SK-N-SH (cell line): ENCODE measurements at regions of chr10 and their contacts with region 1.

Region 1: DNA sequence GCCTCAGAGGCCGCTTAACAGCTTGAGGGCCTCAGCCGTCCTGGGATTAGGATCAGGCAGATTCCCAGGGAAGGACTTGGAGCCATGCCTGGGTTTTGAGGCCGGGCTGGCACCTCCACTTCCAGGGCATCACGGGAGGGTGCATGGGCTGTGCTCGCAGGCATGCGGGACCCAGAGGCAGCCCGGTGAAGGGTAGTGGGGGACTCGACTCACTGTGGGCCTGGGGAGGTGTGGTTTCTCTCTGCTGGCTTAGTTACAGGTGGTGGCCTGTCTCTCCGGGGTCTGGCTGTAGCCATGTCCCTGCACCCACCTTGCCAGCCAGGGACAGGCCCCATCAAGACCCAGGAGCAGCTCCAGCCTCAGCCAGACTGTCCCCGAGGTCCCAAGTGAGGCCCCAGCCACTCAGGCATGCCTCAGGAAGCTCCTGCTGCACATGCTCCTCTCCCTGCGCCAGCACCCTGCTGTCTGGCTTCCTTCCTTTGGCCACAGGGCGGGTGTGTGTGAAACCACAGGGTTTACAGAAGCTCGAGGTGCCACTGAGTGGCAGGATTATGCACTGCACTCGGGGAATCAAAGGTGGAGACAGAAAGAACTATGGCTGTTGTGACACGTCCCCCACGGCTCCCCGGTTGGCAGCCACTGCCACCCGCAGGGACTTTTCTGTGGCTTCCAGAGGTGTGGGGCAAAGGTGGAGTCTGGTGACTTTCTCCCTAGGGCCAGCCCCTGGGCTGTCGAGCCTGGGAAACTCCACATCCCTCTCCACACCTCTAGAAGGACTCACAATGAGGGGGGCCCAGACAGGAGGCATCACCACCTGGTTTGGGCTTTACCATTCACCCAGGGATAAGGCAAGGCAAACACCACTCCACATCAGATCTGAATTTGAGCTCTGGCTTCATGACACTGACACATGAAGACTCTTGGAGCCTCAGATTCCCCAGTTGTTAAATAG is 19.7 kb downstream of the GOLGA7B start:
- DNase-seq: peak; percentile 93
- H3K4me3 ChIP-seq: no peak overlapping the region
- H3K27ac ChIP-seq: peak overlapping the region in 1 of 2 experiments; percentile 80; a peak in 2 of 4 replicates
- H3K4me1 ChIP-seq: peaks cover 0 to 15% of the 10 kb centered on the region in 2 experiments; a peak in 2 of 4 replicates
- H3K27me3 ChIP-seq: peaks cover 18% of the 10 kb centered on the region; the same call in 1 of the 2 replicates
- CTCF ChIP-seq: peak; percentile 72
- EP300 ChIP-seq: no peak
- RAD21 ChIP-seq: peak; percentile 98

Region 2: GRCh38 chr10:97731346-97732051 is 137.9 kb before region 1 on chr10:
- CTCF ChIA-PET with region 1: interaction called, 10 read pairs
- POLR2A ChIA-PET with region 1: no interaction called
- DNase-seq: peak; percentile 70
- H3K4me3 ChIP-seq: peak overlapping the region in 1 of 2 experiments; percentile 10; a peak in 1 of 4 replicates
- H3K27ac ChIP-seq: no peak overlapping the region
- H3K4me1 ChIP-seq: peaks cover 0 to under 1% of the 10 kb centered on the region in 2 experiments; a peak in 1 of 4 replicates
- H3K27me3 ChIP-seq: no peaks in the 10 kb centered on the region
- CTCF ChIP-seq: peak; percentile 88
- EP300 ChIP-seq: no peak
- RAD21 ChIP-seq: peak; percentile 99

Region 3: GRCh38 chr10:97752956-97753355 is 116.4 kb before region 1 on chr10:
- CTCF ChIA-PET with region 1: interaction called, 162 read pairs
- POLR2A ChIA-PET with region 1: interaction called, 5 read pairs
- DNase-seq: no peak
- H3K4me3 ChIP-seq: no peak overlapping the region
- H3K27ac ChIP-seq: no peak overlapping the region
- H3K4me1 ChIP-seq: peaks cover 0 to 4% of the 10 kb centered on the region in 2 experiments; a peak in 1 of 4 replicates
- H3K27me3 ChIP-seq: no peaks in the 10 kb centered on the region
- CTCF ChIP-seq: no peak
- EP300 ChIP-seq: no peak
- RAD21 ChIP-seq: no peak

Region 4: GRCh38 chr10:97780841-97781617 is 88.3 kb before region 1 on chr10:
- CTCF ChIA-PET with region 1: interaction called, 277 read pairs
- POLR2A ChIA-PET with region 1: interaction called, 6 read pairs
- DNase-seq: peak; percentile 57
- H3K4me3 ChIP-seq: no peak overlapping the region
- H3K27ac ChIP-seq: peak overlapping the region in 1 of 2 experiments; percentile 91; a peak in 2 of 4 replicates
- H3K4me1 ChIP-seq: peaks cover 0 to 36% of the 10 kb centered on the region in 2 experiments; a peak in 2 of 4 replicates
- H3K27me3 ChIP-seq: no peaks in the 10 kb centered on the region; the same call in 1 of the 2 replicates
- CTCF ChIP-seq: no peak
- EP300 ChIP-seq: no peak
- RAD21 ChIP-seq: no peak

Region 5: GRCh38 chr10:97849687-97850402 is 19.5 kb before region 1 on chr10 and contains the start of gene GOLGA7B:
- CTCF ChIA-PET with region 1: interaction called, 49 read pairs
- POLR2A ChIA-PET with region 1: interaction called, 4 read pairs
- DNase-seq: peak; percentile 92
- H3K4me3 ChIP-seq: peak within 1 kb of the TSS; percentile 23 to 37; a peak in 2 of 4 replicates
- H3K27ac ChIP-seq: peak within 1 kb of the TSS in 1 of 2 experiments; percentile 29; a peak in 1 of 4 replicates
- H3K4me1 ChIP-seq: peaks cover 0 to 17% of the 10 kb centered on the region in 2 experiments; a peak in 1 of 4 replicates
- H3K27me3 ChIP-seq: peaks cover 32% of the 10 kb centered on the region
- CTCF ChIP-seq: no peak
- EP300 ChIP-seq: no peak
- RAD21 ChIP-seq: no peak
- polyA plus RNA-seq, gene GOLGA7B: 0.03 and 0.13 TPM in 2 replicates

Region 6: DNA sequence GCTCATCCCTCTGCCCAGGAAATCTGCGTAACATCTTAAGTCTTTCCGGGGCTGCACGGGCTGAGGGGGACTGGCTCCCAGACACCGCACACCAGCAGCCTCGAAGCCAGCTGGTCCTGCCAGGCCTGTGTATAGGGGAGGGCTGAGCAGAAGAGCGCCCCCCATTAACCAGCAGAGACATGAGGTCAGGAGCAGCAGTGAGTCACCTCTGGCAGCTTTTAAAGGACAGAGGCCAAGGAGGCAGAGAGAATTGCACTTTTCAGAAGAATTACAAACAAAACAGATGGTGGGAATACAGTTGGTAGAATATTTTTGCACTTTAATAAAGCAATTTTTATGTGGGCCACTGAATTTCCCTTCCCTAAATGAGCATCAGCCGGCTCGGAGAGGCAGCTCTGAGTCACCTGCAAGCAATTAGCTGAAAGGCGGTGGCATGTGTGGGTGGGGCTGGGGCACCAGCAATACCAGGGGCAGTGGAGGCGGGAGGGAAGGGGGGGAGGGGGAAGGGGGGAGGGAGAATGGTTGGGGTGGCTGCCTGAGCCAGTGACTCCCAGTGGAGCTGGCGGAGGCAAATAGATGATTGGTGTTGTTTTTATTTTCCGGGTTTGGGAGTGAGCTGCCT is 19.4 kb after region 1 on chr10:
- CTCF ChIA-PET with region 1: interaction called, 15 read pairs
- POLR2A ChIA-PET with region 1: interaction called, 4 read pairs
- DNase-seq: peak; percentile 88
- H3K4me3 ChIP-seq: no peak overlapping the region
- H3K27ac ChIP-seq: peak overlapping the region; percentile 35 to 66
- H3K4me1 ChIP-seq: peaks cover 5 to 22% of the 10 kb centered on the region in 2 experiments; a peak in 2 of 4 replicates
- H3K27me3 ChIP-seq: peaks cover 4% of the 10 kb centered on the region; the same call in 1 of the 2 replicates
- CTCF ChIP-seq: peak; percentile 41
- EP300 ChIP-seq: peak in 1 of 2 experiments; percentile 49; a peak in 2 of 4 replicates
- RAD21 ChIP-seq: no peak

Region 7: DNA sequence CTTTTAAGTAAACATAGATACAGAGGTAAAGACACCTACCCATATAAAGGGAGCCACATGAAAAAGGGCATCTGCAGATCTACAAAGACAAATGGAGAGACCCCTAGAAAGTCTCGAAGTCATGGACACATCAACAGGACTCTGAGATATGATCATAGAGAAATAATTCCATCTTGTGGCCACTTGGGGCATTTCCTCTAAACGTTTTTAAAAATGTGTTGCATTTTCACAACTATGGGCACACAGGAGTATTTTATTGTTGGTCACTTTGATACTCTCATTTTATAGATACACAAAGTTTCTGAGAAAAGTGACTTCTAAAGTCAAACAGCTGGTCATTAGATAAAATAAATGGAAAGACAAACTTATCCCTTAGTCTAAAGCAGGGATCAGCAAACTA is 73.9 kb after region 1 on chr10:
- CTCF ChIA-PET with region 1: no interaction called
- POLR2A ChIA-PET with region 1: no interaction called
- DNase-seq: no peak
- H3K4me3 ChIP-seq: no peak overlapping the region
- H3K27ac ChIP-seq: no peak overlapping the region
- H3K4me1 ChIP-seq: no peaks in the 10 kb centered on the region
- H3K27me3 ChIP-seq: no peaks in the 10 kb centered on the region; the same call in 1 of the 2 replicates
- CTCF ChIP-seq: peak; percentile 23; the same call in 1 of the 2 replicates
- EP300 ChIP-seq: no peak
- RAD21 ChIP-seq: no peak

Region 8: GRCh38 chr10:98045785-98046389 is 176.5 kb after region 1 on chr10:
- CTCF ChIA-PET with region 1: interaction called, 12 read pairs
- POLR2A ChIA-PET with region 1: no interaction called
- DNase-seq: peak; percentile 72
- H3K4me3 ChIP-seq: no peak overlapping the region; a peak in 1 of 4 replicates
- H3K27ac ChIP-seq: no peak overlapping the region
- H3K4me1 ChIP-seq: peaks cover 0 to 2% of the 10 kb centered on the region in 2 experiments; a peak in 1 of 4 replicates
- H3K27me3 ChIP-seq: peaks cover 5% of the 10 kb centered on the region; the same call in 1 of the 2 replicates
- CTCF ChIP-seq: peak; percentile 91
- EP300 ChIP-seq: no peak
- RAD21 ChIP-seq: peak; percentile 66